CD4-positive, alpha-beta memory T cell (primary cell): ENCODE measurements at regions of chrX and their contacts with region 1.

Region 1: DNA sequence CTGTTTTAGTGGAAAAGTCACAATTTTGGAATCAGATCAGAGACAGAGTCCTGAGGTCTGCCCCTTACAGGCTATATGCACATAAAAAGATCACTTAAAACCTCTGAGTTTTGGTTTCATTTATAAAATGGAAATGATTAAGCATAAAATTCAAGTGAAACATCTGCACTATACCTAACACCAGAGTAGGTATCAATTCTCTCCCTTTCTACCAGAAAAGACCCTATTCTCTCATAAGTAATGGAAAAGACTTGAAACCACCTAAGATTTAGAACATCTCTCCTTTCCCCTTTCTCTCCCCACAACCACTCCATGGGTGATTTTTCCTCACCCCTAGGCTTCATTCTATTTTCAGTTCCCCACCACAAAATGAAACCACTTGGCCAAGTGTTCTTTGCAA is 907 bp downstream of the LHFPL1 start:
- DNase-seq: peak in 2 of 5 donors; percentile 3 to 5
- H3K4me3 ChIP-seq: peak overlapping the region in 1 of 2 donors; percentile 52
- H3K4me3 Mint-ChIP-seq: peak overlapping the region; percentile 72 to 91 (median 82)
- H3K27ac ChIP-seq: peak overlapping the region; percentile 56
- H3K27ac Mint-ChIP-seq: peak overlapping the region; percentile 69 to 93 (median 79)
- H3K4me1 ChIP-seq: peaks cover 37% of the 10 kb centered on the region
- H3K4me1 Mint-ChIP-seq: peaks cover 12 to 46% (median 33%) of the 10 kb centered on the region in 4 donors
- H3K27me3 ChIP-seq: no peaks in the 10 kb centered on the region
- H3K27me3 Mint-ChIP-seq: no peaks in the 10 kb centered on the region

Region 2: DNA sequence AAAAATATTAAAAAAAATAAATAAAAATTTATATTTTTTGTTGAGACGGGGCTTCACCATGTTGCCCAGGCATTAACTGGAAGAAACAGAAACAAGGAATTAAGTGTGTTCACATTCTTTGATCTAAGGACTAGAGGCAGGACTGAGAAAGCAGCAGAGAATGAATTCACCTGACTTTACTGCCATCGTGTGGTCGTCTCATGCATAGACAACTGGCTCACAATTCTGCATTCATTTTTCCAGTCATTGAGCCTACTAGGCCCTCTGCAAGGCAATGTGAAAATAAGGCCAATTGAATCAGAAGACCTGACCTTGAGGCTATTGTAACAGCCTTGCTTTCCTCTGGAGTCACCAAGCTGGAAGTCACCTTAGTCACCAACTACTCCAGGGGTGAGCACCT is 36.5 kb before region 1 on chrX:
- CTCF ChIA-PET with region 1: interaction called, 4 read pairs
- POLR2A ChIA-PET with region 1: no interaction called
- intact Hi-C with region 1: loop called (anchors 2 kb)
- DNase-seq: peak in 4 of 5 donors; percentile 21 to 36 (median 32)
- H3K4me3 ChIP-seq: no peak overlapping the region
- H3K4me3 Mint-ChIP-seq: no peak overlapping the region
- H3K27ac ChIP-seq: no peak overlapping the region
- H3K27ac Mint-ChIP-seq: no peak overlapping the region
- H3K4me1 ChIP-seq: no peaks in the 10 kb centered on the region
- H3K4me1 Mint-ChIP-seq: peaks cover 0 to 7% (median 2%) of the 10 kb centered on the region in 4 donors
- H3K27me3 ChIP-seq: no peaks in the 10 kb centered on the region
- H3K27me3 Mint-ChIP-seq: peaks cover 0 to 2% of the 10 kb centered on the region in 2 donors

Region 3: DNA sequence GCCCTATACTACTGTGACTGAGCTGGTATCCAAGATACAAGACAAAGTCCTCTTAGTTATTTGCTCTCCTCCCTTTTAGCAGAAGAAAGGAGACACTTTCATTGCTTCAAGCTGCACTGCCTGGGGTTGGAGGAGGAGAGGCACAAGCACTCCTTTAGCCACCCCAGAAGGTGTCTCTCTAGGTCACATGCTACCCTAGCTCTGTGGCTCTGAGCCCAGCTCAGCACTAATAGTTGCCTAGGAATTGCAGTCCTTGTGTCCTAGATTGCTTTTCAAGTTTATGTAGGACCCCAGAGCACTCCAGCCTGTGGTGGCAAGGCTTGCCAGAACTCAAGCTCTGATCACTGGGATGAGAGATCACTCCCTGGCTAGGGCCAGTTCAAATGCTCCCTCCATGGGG is 25.4 kb after region 1 on chrX:
- CTCF ChIA-PET with region 1: no interaction called
- POLR2A ChIA-PET with region 1: no interaction called
- intact Hi-C with region 1: no loop called
- DNase-seq: no peak
- H3K4me3 ChIP-seq: no peak overlapping the region
- H3K4me3 Mint-ChIP-seq: no peak overlapping the region
- H3K27ac ChIP-seq: no peak overlapping the region
- H3K27ac Mint-ChIP-seq: no peak overlapping the region
- H3K4me1 ChIP-seq: no peaks in the 10 kb centered on the region
- H3K4me1 Mint-ChIP-seq: no peaks in the 10 kb centered on the region
- H3K27me3 ChIP-seq: no peaks in the 10 kb centered on the region
- H3K27me3 Mint-ChIP-seq: no peaks in the 10 kb centered on the region

Region 4: GRCh38 chrX:112841114-112841819 is 162.4 kb after region 1 on chrX:
- CTCF ChIA-PET with region 1: no interaction called
- POLR2A ChIA-PET with region 1: interaction called, 15 read pairs
- intact Hi-C with region 1: loop called (anchors 1 kb)
- DNase-seq: peak; percentile 79 to 82 (median 80)
- H3K4me3 ChIP-seq: peak overlapping the region; percentile 29 to 67
- H3K4me3 Mint-ChIP-seq: peak overlapping the region; percentile 83 to 95 (median 92)
- H3K27ac ChIP-seq: peak overlapping the region; percentile 59
- H3K27ac Mint-ChIP-seq: peak overlapping the region; percentile 71 to 91 (median 90)
- H3K4me1 ChIP-seq: peaks cover 7% of the 10 kb centered on the region
- H3K4me1 Mint-ChIP-seq: peaks cover 2 to 19% (median 12%) of the 10 kb centered on the region in 4 donors
- H3K27me3 ChIP-seq: no peaks in the 10 kb centered on the region
- H3K27me3 Mint-ChIP-seq: no peaks in the 10 kb centered on the region